ENCODE measurements at regions of chr7 and their contacts with region 1.

Region 1: GRCh38 chr7:16062269-16062668 is 359.1 kb downstream of the CRPPA start:
- DNase-seq: no peak
- H3K4me3 ChIP-seq: no peak overlapping the region
- H3K27ac ChIP-seq: peak overlapping the region; percentile 81 to 87
- H3K4me1 ChIP-seq: peaks cover 5 to 6% of the 10 kb centered on the region in 2 donors
- H3K27me3 ChIP-seq: no peaks in the 10 kb centered on the region
- CTCF ChIP-seq: no peak
- POLR2A ChIP-seq: no peak

Region 2: DNA sequence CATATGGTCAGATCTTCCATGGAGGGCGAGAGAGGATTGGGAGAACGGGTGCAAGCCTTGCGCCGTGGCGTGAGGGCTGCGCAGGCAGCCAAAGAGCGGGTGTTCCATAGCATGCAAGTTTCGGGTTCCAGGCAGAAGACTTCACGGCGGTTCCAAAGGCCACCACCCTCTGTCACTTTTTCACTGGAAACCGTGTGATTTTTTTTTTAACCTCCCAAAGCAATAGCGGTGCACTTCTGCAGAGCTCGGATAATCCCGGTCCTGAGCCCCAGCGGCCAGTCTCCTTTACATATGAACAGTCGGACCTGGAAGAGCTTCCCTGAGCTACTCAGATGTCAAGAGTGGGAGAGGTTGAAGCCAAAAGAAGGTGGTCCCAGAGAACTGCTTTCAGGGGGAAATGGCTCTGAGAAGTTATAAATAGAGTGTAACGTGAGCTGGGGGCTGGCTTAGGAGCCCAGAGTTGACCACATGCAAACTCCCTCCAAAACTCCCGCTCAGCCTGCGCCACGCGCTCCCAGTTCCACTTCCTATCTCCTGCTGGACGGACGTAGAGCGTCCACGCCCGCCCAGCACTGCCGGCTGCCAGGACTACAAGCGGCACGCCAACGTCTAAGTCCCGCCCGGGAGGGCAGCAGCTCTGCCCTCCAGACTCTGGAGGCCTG is 375.8 kb before region 1 on chr7 and contains the start of gene MEOX2:
- intact Hi-C with region 1: loop called (anchors 10 kb)
- DNase-seq: no peak
- H3K4me3 ChIP-seq: peak within 1 kb of the TSS; percentile 46 to 78 (median 60)
- H3K27ac ChIP-seq: peak within 1 kb of the TSS; percentile 68 to 94
- H3K4me1 ChIP-seq: peaks cover 0 to 3% of the 10 kb centered on the region in 2 donors
- H3K27me3 ChIP-seq: peaks cover 0 to 48% of the 10 kb centered on the region in 2 donors
- CTCF ChIP-seq: no peak
- POLR2A ChIP-seq: peak; percentile 9
- total RNA-seq, gene MEOX2: 6.4 to 19.7 (median 14.2) TPM

Region 3: GRCh38 chr7:16484453-16485158 is 422.3 kb after region 1 on chr7:
- intact Hi-C with region 1: no loop called
- DNase-seq: peak in 1 of 2 donors; percentile 47
- H3K4me3 ChIP-seq: no peak overlapping the region
- H3K27ac ChIP-seq: peak overlapping the region; percentile 73 to 79
- H3K4me1 ChIP-seq: no peaks in the 10 kb centered on the region
- H3K27me3 ChIP-seq: no peaks in the 10 kb centered on the region
- CTCF ChIP-seq: no peak
- POLR2A ChIP-seq: no peak

Measured in breast epithelium (tissue), 4 donors.